Naive thymus-derived CD4-positive, alpha-beta T cell (primary cell): ENCODE measurements at regions of chr1 and their contacts with region 1.

Region 1: GRCh38 chr1:183218971-183219615 is 33.0 kb downstream of the LAMC2 start:
- DNase-seq: peak in 8 of 9 donors; percentile 10 to 89 (median 84)
- ATAC-seq: peak; percentile 84
- H3K4me3 ChIP-seq: no peak overlapping the region
- H3K4me3 Mint-ChIP-seq: peak overlapping the region in 9 of 10 donors; percentile 28 to 64 (median 53)
- H3K27ac ChIP-seq: no peak overlapping the region
- H3K27ac Mint-ChIP-seq: peak overlapping the region in 8 of 9 donors; percentile 15 to 86 (median 41)
- H3K4me1 ChIP-seq: peaks cover 0 to 21% of the 10 kb centered on the region in 2 donors
- H3K4me1 Mint-ChIP-seq: peaks cover 13 to 44% (median 36%) of the 10 kb centered on the region in 7 donors
- H3K27me3 ChIP-seq: no peaks in the 10 kb centered on the region
- H3K27me3 Mint-ChIP-seq: peaks cover 0 to 5% (median 0%) of the 10 kb centered on the region in 5 donors

Region 2: DNA sequence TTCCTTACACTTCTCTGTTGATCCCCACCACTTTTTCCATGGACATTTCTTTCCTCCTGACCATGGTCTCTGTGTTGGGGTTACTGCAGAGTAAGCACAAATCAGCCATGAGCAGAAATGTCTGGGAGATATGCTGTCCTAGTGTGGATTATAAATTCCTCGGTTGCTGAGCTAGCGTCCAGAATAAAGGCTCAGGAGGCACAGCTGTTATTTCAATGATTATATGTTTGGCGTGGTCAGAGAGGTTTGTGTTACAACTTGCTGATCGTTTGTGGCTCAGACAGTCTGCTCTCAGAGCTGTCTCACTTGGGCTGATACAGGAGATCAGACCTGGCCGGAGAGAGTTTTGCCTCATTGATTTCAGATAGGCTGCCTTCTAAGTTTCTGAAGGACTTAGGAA is 70.5 kb before region 1 on chr1:
- CTCF ChIA-PET with region 1: no interaction called
- POLR2A ChIA-PET with region 1: no interaction called
- intact Hi-C with region 1: no loop called
- DNase-seq: no peak
- ATAC-seq: no peak
- H3K4me3 ChIP-seq: no peak overlapping the region
- H3K4me3 Mint-ChIP-seq: no peak overlapping the region
- H3K27ac ChIP-seq: no peak overlapping the region
- H3K27ac Mint-ChIP-seq: no peak overlapping the region
- H3K4me1 ChIP-seq: no peaks in the 10 kb centered on the region
- H3K4me1 Mint-ChIP-seq: peaks cover 0 to 2% (median 0%) of the 10 kb centered on the region in 7 donors
- H3K27me3 ChIP-seq: no peaks in the 10 kb centered on the region
- H3K27me3 Mint-ChIP-seq: peaks cover 0 to 12% (median 12%) of the 10 kb centered on the region in 5 donors

Region 3: DNA sequence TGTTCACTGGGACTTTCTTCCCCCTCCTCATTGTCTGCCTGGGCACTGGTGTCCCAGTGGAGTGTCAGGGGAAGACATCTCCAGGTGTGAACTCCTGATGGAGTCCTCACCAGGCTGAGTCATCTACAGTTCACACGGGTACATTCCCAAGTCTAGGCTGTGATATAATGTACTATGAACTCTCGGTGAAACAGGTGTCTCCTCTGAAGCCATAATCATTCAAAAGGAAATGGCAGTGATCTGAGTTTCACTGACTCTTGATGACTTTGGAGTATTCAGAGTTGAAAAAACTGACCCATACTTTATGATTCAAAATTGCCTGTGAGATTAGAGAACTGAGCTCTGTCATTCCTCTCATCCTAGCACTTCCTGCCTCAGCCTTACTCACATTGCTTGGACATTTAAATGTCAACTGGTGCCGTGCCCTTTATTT is 23.9 kb before region 1 on chr1:
- CTCF ChIA-PET with region 1: no interaction called
- POLR2A ChIA-PET with region 1: interaction called, 4 read pairs
- intact Hi-C with region 1: loop called in 1 of 2 experiments (anchors 2 kb)
- DNase-seq: no peak
- ATAC-seq: peak; percentile 14
- H3K4me3 ChIP-seq: no peak overlapping the region
- H3K4me3 Mint-ChIP-seq: peak overlapping the region; percentile 5 to 78 (median 49)
- H3K27ac ChIP-seq: no peak overlapping the region
- H3K27ac Mint-ChIP-seq: peak overlapping the region in 5 of 9 donors; percentile 8 to 53 (median 27)
- H3K4me1 ChIP-seq: peaks cover 0 to 12% of the 10 kb centered on the region in 2 donors
- H3K4me1 Mint-ChIP-seq: peaks cover 7 to 23% (median 15%) of the 10 kb centered on the region in 7 donors
- H3K27me3 ChIP-seq: no peaks in the 10 kb centered on the region
- H3K27me3 Mint-ChIP-seq: peaks cover 0 to 33% (median 9%) of the 10 kb centered on the region in 5 donors

Region 4: DNA sequence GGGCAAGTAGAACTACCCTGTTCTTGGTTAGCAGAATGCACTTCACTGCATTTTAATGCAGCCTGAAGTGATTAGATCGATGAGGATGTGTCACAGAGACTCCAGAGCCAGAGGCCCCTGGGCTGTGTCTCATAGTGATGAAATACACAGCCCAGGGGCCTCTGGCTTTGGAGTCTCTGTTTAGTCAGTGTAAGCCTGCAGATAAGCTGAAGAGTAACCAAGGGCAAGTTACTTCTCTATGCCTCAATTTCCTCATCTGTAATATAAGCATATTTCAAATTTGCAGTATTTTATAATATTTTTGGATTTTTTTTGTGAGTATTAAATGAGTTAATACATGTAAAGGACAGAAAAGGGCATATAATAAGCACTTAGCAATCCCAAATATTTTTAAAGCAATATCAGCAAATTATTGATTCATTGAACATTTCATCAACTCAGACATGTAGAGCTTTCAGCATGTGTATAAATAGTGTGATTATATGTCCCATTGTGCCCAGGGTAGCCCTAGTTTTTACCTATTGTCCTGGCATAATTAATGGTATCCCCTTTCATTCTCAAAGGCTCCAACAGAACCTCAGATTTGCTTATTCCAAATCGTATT is 457.6 kb after region 1 on chr1:
- CTCF ChIA-PET with region 1: no interaction called
- POLR2A ChIA-PET with region 1: no interaction called
- intact Hi-C with region 1: no loop called
- DNase-seq: no peak
- ATAC-seq: no peak
- H3K4me3 ChIP-seq: no peak overlapping the region
- H3K4me3 Mint-ChIP-seq: no peak overlapping the region
- H3K27ac ChIP-seq: no peak overlapping the region
- H3K27ac Mint-ChIP-seq: no peak overlapping the region
- H3K4me1 ChIP-seq: no peaks in the 10 kb centered on the region
- H3K4me1 Mint-ChIP-seq: no peaks in the 10 kb centered on the region
- H3K27me3 ChIP-seq: no peaks in the 10 kb centered on the region
- H3K27me3 Mint-ChIP-seq: peaks cover 0 to 26% (median 9%) of the 10 kb centered on the region in 5 donors